IMR-90 (cell line): ENCODE measurements at regions of chr22 and their contacts with region 1.

Region 1: GRCh38 chr22:40196628-40197360 is 19.1 kb downstream of the TNRC6B start:
- DNase-seq: peak; percentile 97
- ATAC-seq: peak; percentile 100
- H3K4me3 ChIP-seq: no peak overlapping the region
- H3K27ac ChIP-seq: no peak overlapping the region
- H3K4me1 ChIP-seq: peaks cover 16% of the 10 kb centered on the region
- H3K27me3 ChIP-seq: no peaks in the 10 kb centered on the region
- CTCF ChIP-seq: no peak
- POLR2A ChIP-seq: no peak
- RAD21 ChIP-seq: no peak; the same call in 1 of the 2 replicates

Region 2: GRCh38 chr22:40118979-40119378 is 77.8 kb before region 1 on chr22:
- CTCF ChIA-PET with region 1: no interaction called
- POLR2A ChIA-PET with region 1: no interaction called
- dilution Hi-C with region 1: no loop called
- in situ Hi-C with region 1: no loop called
- intact Hi-C with region 1: no loop called
- DNase-seq: no peak
- ATAC-seq: no peak
- H3K4me3 ChIP-seq: no peak overlapping the region
- H3K27ac ChIP-seq: no peak overlapping the region
- H3K4me1 ChIP-seq: no peaks in the 10 kb centered on the region
- H3K27me3 ChIP-seq: no peaks in the 10 kb centered on the region
- CTCF ChIP-seq: no peak
- POLR2A ChIP-seq: no peak
- RAD21 ChIP-seq: no peak

Region 3: DNA sequence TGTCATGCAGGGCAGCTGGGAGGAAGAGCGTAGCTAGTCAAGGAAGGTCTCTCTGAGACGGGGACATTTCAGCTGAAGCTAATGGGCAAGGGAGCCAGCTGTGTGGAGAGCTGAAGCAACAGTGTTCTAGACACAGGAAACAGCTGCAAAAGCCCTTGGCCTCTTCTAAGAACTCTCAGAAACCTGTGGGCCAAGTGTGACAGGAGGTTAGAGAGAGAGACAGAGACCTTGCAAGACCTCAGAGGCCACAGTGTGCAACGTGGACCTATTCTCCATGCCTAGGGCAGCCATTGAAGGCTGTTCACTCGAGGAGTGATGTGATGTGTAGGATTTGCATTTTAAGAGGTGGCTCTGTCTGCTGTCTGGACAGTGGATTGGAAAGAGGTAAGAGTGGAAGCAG is 67.8 kb before region 1 on chr22:
- CTCF ChIA-PET with region 1: no interaction called
- POLR2A ChIA-PET with region 1: interaction called, 13 read pairs
- dilution Hi-C with region 1: no loop called
- in situ Hi-C with region 1: no loop called
- intact Hi-C with region 1: no loop called
- DNase-seq: no peak
- ATAC-seq: no peak
- H3K4me3 ChIP-seq: no peak overlapping the region
- H3K27ac ChIP-seq: no peak overlapping the region
- H3K4me1 ChIP-seq: no peaks in the 10 kb centered on the region
- H3K27me3 ChIP-seq: no peaks in the 10 kb centered on the region
- CTCF ChIP-seq: no peak
- POLR2A ChIP-seq: no peak
- RAD21 ChIP-seq: no peak

Region 4: DNA sequence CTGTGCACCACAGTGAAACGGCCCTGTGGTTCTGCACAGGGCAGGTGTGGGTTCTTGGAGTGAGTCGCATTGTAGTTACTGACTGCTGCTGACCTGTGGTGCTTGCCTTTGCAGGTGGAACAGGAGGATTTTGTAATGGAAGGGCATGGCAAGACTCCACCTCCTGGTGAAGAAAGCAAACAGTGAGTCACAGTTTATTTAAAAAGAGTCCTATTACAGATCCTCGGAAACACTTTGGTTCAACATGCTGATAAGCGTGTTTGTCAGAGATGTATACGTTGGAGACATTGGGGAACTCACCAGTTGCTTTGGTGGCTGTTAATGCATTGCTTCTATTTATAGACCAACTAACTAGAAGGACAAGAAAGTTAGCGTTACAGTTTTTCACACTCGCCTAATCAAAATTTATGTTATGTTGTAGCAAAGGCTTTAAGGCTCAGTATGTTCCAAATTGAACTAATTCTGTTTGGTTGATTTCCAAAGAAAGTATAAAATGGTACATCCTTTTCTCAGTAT is 40.7 kb before region 1 on chr22:
- CTCF ChIA-PET with region 1: no interaction called
- POLR2A ChIA-PET with region 1: no interaction called
- dilution Hi-C with region 1: no loop called
- in situ Hi-C with region 1: no loop called
- intact Hi-C with region 1: no loop called
- DNase-seq: peak; percentile 85
- ATAC-seq: peak; percentile 91
- H3K4me3 ChIP-seq: no peak overlapping the region
- H3K27ac ChIP-seq: no peak overlapping the region
- H3K4me1 ChIP-seq: peaks cover 3% of the 10 kb centered on the region
- H3K27me3 ChIP-seq: no peaks in the 10 kb centered on the region
- CTCF ChIP-seq: peak; percentile 15; the same call in 1 of the 2 replicates
- POLR2A ChIP-seq: no peak
- RAD21 ChIP-seq: peak; percentile 15; the same call in 1 of the 2 replicates

Region 5: GRCh38 chr22:40247976-40248375 is 51.2 kb after region 1 on chr22:
- CTCF ChIA-PET with region 1: no interaction called
- POLR2A ChIA-PET with region 1: no interaction called
- dilution Hi-C with region 1: no loop called
- in situ Hi-C with region 1: loop called (anchors 5 kb)
- intact Hi-C with region 1: no loop called
- DNase-seq: no peak
- ATAC-seq: no peak
- H3K4me3 ChIP-seq: no peak overlapping the region
- H3K27ac ChIP-seq: no peak overlapping the region
- H3K4me1 ChIP-seq: no peaks in the 10 kb centered on the region
- H3K27me3 ChIP-seq: no peaks in the 10 kb centered on the region
- CTCF ChIP-seq: no peak
- POLR2A ChIP-seq: no peak
- RAD21 ChIP-seq: no peak